Left lung (tissue), 14 donors: ENCODE measurements at regions of chr16 and their contacts with region 1.

Region 1: GRCh38 chr16:77437859-77438258 is 3.0 kb upstream of the ADAMTS18 start:
- DNase-seq: no peak
- ATAC-seq: no peak
- H3K4me3 ChIP-seq: no peak overlapping the region
- H3K27ac ChIP-seq: no peak overlapping the region
- H3K4me1 ChIP-seq: no peaks in the 10 kb centered on the region
- H3K27me3 ChIP-seq: peaks cover 25 to 38% of the 10 kb centered on the region in 2 donors
- CTCF ChIP-seq: no peak

Region 2: GRCh38 chr16:77250400-77250799 is 187.5 kb before region 1 on chr16:
- intact Hi-C with region 1: no loop called
- DNase-seq: no peak
- ATAC-seq: no peak
- H3K4me3 ChIP-seq: no peak overlapping the region
- H3K27ac ChIP-seq: no peak overlapping the region
- H3K4me1 ChIP-seq: no peaks in the 10 kb centered on the region
- H3K27me3 ChIP-seq: no peaks in the 10 kb centered on the region
- CTCF ChIP-seq: no peak

Region 3: DNA sequence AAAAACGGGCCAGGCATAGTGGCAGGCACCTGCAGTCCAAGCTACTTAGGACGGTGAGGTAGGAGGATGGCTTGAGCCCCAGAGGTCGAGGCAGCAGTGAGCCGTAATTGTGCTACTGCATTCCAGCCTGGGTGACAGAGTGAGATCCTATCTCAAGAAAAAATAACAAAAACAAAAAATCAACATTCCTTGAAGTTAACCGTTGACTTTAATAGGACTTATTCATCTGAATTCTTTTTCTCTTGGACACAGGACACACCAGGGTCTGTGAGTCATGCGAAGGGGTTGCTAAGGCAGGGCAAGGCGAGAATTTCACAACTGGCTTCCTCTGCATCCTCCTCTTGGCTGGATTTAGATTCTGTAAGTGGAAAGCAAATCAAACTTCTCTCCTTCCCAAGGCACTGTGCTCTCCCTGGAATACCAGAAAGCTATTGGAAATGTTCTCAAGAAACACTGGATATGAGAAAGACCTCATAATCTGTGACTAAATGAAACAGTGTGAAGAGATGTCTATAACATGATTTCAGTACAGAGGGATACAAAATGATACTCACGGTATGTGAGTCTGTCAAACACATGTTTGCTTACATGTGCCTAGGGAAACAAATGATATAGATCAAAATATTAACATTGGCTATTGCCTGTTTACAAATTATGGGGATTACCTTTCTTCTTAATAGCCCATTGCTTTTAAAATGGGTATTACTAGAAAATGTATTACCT is 139.1 kb before region 1 on chr16:
- intact Hi-C with region 1: no loop called
- DNase-seq: no peak
- ATAC-seq: peak; percentile 82
- H3K4me3 ChIP-seq: no peak overlapping the region
- H3K27ac ChIP-seq: no peak overlapping the region
- H3K4me1 ChIP-seq: no peaks in the 10 kb centered on the region
- H3K27me3 ChIP-seq: no peaks in the 10 kb centered on the region
- CTCF ChIP-seq: no peak

Region 4: GRCh38 chr16:77499373-77500285 is 61.8 kb after region 1 on chr16:
- intact Hi-C with region 1: loop called in 1 of 2 experiments (anchors 10 kb)
- DNase-seq: no peak
- ATAC-seq: peak; percentile 39
- H3K4me3 ChIP-seq: no peak overlapping the region
- H3K27ac ChIP-seq: no peak overlapping the region
- H3K4me1 ChIP-seq: no peaks in the 10 kb centered on the region
- H3K27me3 ChIP-seq: no peaks in the 10 kb centered on the region
- CTCF ChIP-seq: no peak

Region 5: GRCh38 chr16:77514500-77515220 is 76.8 kb after region 1 on chr16:
- intact Hi-C with region 1: no loop called
- DNase-seq: no peak
- ATAC-seq: no peak
- H3K4me3 ChIP-seq: no peak overlapping the region
- H3K27ac ChIP-seq: no peak overlapping the region
- H3K4me1 ChIP-seq: no peaks in the 10 kb centered on the region
- H3K27me3 ChIP-seq: no peaks in the 10 kb centered on the region
- CTCF ChIP-seq: no peak

Region 6: DNA sequence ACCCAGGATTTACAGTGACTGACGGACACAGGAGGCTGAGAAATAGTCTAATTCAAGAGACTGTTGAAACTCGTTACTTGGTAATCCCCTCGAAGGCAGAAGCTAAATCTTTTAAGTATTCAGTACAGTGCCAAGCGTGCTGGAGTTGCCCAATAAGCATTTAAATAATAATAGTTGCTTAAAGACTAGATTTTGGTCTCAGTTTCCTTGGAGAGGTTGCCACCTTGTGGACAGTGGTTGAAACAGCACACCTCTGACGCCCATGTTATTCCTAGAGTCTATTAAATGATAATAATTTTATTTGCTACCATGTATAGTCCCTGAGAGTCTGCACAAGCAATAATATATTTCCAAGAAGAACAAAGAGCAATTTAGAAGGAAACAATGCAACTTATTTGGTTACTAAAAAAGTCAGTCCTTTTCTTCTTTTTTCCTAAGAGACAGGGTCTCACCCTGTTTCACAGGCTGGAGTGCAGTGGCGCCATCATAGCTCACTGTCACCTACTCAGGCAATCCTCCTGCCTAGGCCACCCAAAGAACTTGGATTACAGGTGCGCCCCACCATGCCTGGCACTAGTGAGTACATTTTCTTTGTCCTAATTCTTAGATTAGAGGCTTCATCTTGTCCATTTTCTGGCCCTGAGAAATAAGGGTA is 146.5 kb after region 1 on chr16:
- intact Hi-C with region 1: loop called in 1 of 2 experiments (anchors 10 kb)
- DNase-seq: peak in 2 of 4 donors; percentile 42 to 72
- ATAC-seq: peak; percentile 89
- H3K4me3 ChIP-seq: no peak overlapping the region
- H3K27ac ChIP-seq: no peak overlapping the region
- H3K4me1 ChIP-seq: no peaks in the 10 kb centered on the region
- H3K27me3 ChIP-seq: peaks cover 0 to 5% of the 10 kb centered on the region in 2 donors
- CTCF ChIP-seq: peak; percentile 83 to 89

Region 7: DNA sequence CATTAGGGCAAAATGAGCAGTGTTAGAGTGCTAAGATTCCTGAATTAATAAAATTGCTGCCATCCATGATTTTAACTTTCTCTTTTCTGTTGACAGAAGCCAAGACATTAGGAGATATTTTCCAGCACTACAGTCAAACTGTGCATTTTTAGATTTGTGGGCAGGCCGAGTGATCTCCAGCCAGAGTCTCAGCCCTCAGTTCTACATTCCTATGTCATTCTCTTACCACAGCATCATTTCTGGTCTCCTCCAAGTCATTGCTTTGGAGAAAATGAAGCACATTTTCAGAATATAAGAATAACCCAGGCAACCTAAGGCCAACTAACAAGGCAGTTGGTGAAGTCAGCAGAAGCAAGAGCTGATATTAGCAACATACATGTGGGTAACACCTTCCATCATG is 209.9 kb after region 1 on chr16:
- intact Hi-C with region 1: no loop called
- DNase-seq: no peak
- ATAC-seq: no peak
- H3K4me3 ChIP-seq: no peak overlapping the region
- H3K27ac ChIP-seq: no peak overlapping the region
- H3K4me1 ChIP-seq: no peaks in the 10 kb centered on the region
- H3K27me3 ChIP-seq: no peaks in the 10 kb centered on the region
- CTCF ChIP-seq: no peak